ENCODE measurements at regions of chr14 and their contacts with region 1.

Region 1: GRCh38 chr14:21103710-21104447 is 3.0 kb downstream of the TMEM253 start:
- DNase-seq: peak; percentile 93 to 96
- ATAC-seq: peak; percentile 83 to 94 (median 87)
- H3K4me3 ChIP-seq: peak overlapping the region; percentile 60
- H3K4me3 Mint-ChIP-seq: peak overlapping the region; percentile 92
- H3K27ac ChIP-seq: peak overlapping the region; percentile 100
- H3K27ac Mint-ChIP-seq: peak overlapping the region; percentile 91 to 95
- H3K4me1 ChIP-seq: peaks cover 22% of the 10 kb centered on the region
- H3K4me1 Mint-ChIP-seq: peaks cover 32 to 38% of the 10 kb centered on the region in 2 donors
- H3K27me3 ChIP-seq: no peaks in the 10 kb centered on the region
- H3K27me3 Mint-ChIP-seq: peaks cover 0 to 4% of the 10 kb centered on the region in 2 donors
- CTCF ChIP-seq: no peak

Region 2: DNA sequence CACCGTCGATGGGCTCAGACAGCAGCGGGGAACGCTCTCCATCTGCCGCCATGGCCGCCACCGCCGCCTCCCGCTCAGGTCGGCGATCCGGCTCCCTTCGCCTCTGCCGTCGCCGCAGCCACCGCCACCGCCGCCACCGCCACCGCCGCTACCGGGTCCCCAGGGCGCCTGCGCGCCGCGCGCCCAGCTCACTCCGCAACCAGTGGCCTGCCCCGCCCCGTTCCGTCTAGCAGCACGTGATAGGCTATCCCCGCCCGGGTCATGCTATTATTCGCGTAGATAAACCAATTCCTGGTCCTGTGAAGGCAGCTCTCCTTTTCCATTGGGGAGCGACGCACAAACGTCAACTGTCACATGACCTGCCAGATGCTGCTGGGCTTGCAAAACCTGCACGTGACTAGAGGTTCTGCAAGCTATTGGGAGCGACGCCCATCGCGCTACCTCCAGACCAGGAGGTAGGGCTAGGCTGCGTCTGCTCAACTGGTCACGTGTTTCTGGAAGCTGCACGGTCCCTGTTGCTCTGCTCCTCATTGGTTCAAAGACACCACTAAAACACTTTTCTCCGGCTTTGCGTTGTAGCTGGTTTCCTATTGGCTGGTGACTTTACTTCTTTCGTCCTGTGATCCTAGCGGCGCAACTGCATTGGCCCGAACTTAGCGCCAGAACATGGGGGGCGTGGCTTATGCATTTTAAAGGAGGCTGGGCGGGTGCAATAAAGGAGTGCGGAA is 642.4 kb before region 1 on chr14 and contains the start of gene PIP4P1:
- intact Hi-C with region 1: loop called (anchors 5 kb)
- DNase-seq: peak; percentile 97 to 99
- ATAC-seq: peak; percentile 87 to 96 (median 88)
- H3K4me3 ChIP-seq: peak within 1 kb of the TSS; percentile 84
- H3K4me3 Mint-ChIP-seq: peak within 1 kb of the TSS; percentile 89
- H3K27ac ChIP-seq: peak within 1 kb of the TSS; percentile 95
- H3K27ac Mint-ChIP-seq: peak within 1 kb of the TSS; percentile 94 to 95
- H3K4me1 ChIP-seq: peaks cover 28% of the 10 kb centered on the region
- H3K4me1 Mint-ChIP-seq: peaks cover 26 to 33% of the 10 kb centered on the region in 2 donors
- H3K27me3 ChIP-seq: no peaks in the 10 kb centered on the region
- H3K27me3 Mint-ChIP-seq: no peaks in the 10 kb centered on the region
- CTCF ChIP-seq: no peak
- total RNA-seq, gene PIP4P1: 61.5 to 68.2 (median 63.3) TPM

Region 3: DNA sequence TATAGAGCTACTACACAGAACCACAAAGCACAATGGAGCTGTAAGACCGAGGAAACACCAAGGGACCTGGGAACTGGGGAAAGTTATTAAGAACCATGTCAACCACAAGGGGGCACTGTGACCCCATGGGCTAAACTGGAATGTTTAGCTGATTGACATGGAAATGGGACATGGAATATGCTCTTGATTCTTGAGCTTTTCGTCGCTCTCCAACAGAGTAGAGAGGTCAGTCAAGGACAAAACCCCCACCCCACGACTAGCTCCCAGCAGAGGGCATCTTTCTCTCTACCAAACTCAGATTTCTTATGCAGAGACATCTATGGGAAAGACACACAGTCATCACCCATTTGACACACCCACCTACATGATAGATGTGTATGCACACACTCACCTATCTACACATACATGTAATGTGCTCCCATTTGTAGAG is 89.1 kb before region 1 on chr14:
- intact Hi-C with region 1: loop called (anchors 1 kb)
- DNase-seq: peak; percentile 72 to 92
- ATAC-seq: peak; percentile 74 to 89 (median 87)
- H3K4me3 ChIP-seq: no peak overlapping the region
- H3K4me3 Mint-ChIP-seq: no peak overlapping the region
- H3K27ac ChIP-seq: no peak overlapping the region
- H3K27ac Mint-ChIP-seq: no peak overlapping the region
- H3K4me1 ChIP-seq: no peaks in the 10 kb centered on the region
- H3K4me1 Mint-ChIP-seq: no peaks in the 10 kb centered on the region
- H3K27me3 ChIP-seq: peaks cover 4% of the 10 kb centered on the region
- H3K27me3 Mint-ChIP-seq: peaks cover 14 to 18% of the 10 kb centered on the region in 2 donors
- CTCF ChIP-seq: peak; percentile 88

Region 4: GRCh38 chr14:21024585-21025370 is 79.1 kb before region 1 on chr14 and contains the start of gene NDRG2:
- intact Hi-C with region 1: no loop called
- DNase-seq: peak; percentile 56 to 85
- ATAC-seq: peak; percentile 84 to 90 (median 89)
- H3K4me3 ChIP-seq: peak within 1 kb of the TSS; percentile 81
- H3K4me3 Mint-ChIP-seq: peak within 1 kb of the TSS; percentile 84
- H3K27ac ChIP-seq: no peak within 1 kb of the TSS
- H3K27ac Mint-ChIP-seq: peak within 1 kb of the TSS in 1 of 2 donors; percentile 67
- H3K4me1 ChIP-seq: peaks cover 23% of the 10 kb centered on the region
- H3K4me1 Mint-ChIP-seq: peaks cover 7 to 13% of the 10 kb centered on the region in 2 donors
- H3K27me3 ChIP-seq: peaks cover 2% of the 10 kb centered on the region
- H3K27me3 Mint-ChIP-seq: peaks cover 0 to 15% of the 10 kb centered on the region in 2 donors
- CTCF ChIP-seq: no peak
- total RNA-seq, gene NDRG2: 11.2 to 14.6 (median 13.6) TPM

Region 5: GRCh38 chr14:21071225-21072030 is 32.5 kb before region 1 on chr14:
- intact Hi-C with region 1: loop called (anchors 1 kb)
- DNase-seq: peak; percentile 37 to 61
- ATAC-seq: peak; percentile 52 to 64 (median 61)
- H3K4me3 ChIP-seq: peak overlapping the region; percentile 30
- H3K4me3 Mint-ChIP-seq: peak overlapping the region; percentile 89
- H3K27ac ChIP-seq: no peak overlapping the region
- H3K27ac Mint-ChIP-seq: peak overlapping the region; percentile 51 to 88
- H3K4me1 ChIP-seq: peaks cover 44% of the 10 kb centered on the region
- H3K4me1 Mint-ChIP-seq: peaks cover 31 to 41% of the 10 kb centered on the region in 2 donors
- H3K27me3 ChIP-seq: peaks cover 37% of the 10 kb centered on the region
- H3K27me3 Mint-ChIP-seq: peaks cover 60 to 64% of the 10 kb centered on the region in 2 donors
- CTCF ChIP-seq: no peak

Region 6: GRCh38 chr14:21092273-21093011 is 11.4 kb before region 1 on chr14:
- intact Hi-C with region 1: loop called (anchors 1 kb)
- DNase-seq: peak; percentile 94 to 97
- ATAC-seq: peak; percentile 91 to 98 (median 94)
- H3K4me3 ChIP-seq: no peak overlapping the region
- H3K4me3 Mint-ChIP-seq: no peak overlapping the region
- H3K27ac ChIP-seq: no peak overlapping the region
- H3K27ac Mint-ChIP-seq: peak overlapping the region; percentile 41 to 68
- H3K4me1 ChIP-seq: peaks cover 18% of the 10 kb centered on the region
- H3K4me1 Mint-ChIP-seq: peaks cover 13 to 14% of the 10 kb centered on the region in 2 donors
- H3K27me3 ChIP-seq: no peaks in the 10 kb centered on the region
- H3K27me3 Mint-ChIP-seq: no peaks in the 10 kb centered on the region
- CTCF ChIP-seq: peak; percentile 100

Measured in natural killer cell (primary cell).